Right ventricle myocardium superior (tissue), 1 donor: ENCODE measurements at regions of chr18 and their contacts with region 1.

Region 1: GRCh38 chr18:66949419-66949818 is 345.5 kb upstream of the CDH19 start:
- DNase-seq: no peak
- ATAC-seq: no peak

Region 2: GRCh38 chr18:67007085-67007484 is 57.7 kb after region 1 on chr18:
- intact Hi-C with region 1: loop called (anchors 5 kb)
- DNase-seq: no peak
- ATAC-seq: no peak